ENCODE measurements at regions of chr2 and their contacts with region 1.

Region 1: DNA sequence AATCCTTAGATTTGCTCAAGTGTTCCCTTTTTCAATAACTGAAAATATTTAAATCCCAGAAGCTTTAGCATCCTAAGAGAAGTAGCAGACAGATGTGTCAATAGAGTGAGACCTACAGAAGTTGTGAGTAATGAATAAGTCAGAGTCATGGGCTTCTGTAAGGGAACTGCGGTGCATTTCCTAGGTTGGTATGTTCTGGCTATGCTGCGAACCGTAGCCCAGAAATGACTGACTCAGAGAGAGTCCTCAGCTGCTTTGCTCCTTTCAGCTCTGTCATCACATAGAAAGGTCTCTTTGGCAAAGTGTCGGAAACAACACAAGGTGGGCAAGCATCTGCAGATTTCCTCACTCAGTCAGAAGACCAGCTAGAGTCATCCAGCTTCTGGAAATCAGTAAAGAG is 297.1 kb downstream of the ARHGAP15 start:
- DNase-seq: no peak
- ATAC-seq: no peak
- H3K4me3 Mint-ChIP-seq: no peak overlapping the region
- H3K27ac Mint-ChIP-seq: no peak overlapping the region
- H3K4me1 Mint-ChIP-seq: peaks cover 25% of the 10 kb centered on the region
- H3K27me3 Mint-ChIP-seq: no peaks in the 10 kb centered on the region
- CTCF ChIP-seq: no peak

Region 2: DNA sequence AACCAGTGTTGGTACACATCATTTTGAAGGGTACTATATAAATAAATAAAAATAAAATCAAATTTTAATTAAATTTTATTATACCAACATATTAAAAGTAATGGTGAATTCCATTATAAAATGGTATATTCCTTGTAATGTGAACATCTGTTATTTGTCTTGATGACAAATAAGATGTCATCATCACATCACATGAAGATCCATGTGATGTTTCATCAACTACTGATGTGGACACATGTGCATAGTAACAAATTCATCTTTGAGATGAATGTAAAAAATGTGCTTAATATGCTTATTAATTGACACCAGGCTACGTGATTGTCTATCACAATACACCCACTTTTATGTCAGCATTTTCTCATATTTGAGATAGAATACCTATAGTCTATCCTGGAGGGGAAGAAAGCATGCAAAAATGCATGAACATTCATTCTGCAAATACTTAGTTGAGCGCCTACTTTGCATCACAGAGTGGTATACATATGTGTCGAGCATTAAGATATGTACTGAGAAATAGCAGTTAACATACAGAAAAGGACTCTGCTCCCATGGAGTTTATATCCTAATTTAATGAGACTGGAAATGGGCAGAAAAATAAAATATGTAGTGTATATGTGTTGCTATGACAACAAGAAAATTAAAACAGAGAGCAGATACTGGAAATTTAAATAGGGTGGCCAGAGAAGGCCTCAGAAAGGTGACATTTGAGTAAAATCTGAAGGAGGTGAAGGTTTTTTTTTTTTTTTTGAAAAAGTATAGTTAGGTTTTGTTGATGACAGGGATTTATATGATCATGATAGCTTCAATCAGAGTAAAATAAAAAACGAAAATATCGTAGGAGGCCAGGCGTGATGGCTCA is 16.0 kb before region 1 on chr2:
- CTCF ChIA-PET with region 1: no interaction called
- POLR2A ChIA-PET with region 1: no interaction called
- intact Hi-C with region 1: loop called (anchors 2 kb)
- DNase-seq: no peak
- ATAC-seq: no peak
- H3K4me3 Mint-ChIP-seq: no peak overlapping the region
- H3K27ac Mint-ChIP-seq: no peak overlapping the region
- H3K4me1 Mint-ChIP-seq: peaks cover 2% of the 10 kb centered on the region
- H3K27me3 Mint-ChIP-seq: no peaks in the 10 kb centered on the region
- CTCF ChIP-seq: no peak

Measured in activated B cell treated with CpG ODN at 0.5 μM for 24 hours (primary cell).